ENCODE measurements at regions of chr7 and their contacts with region 1.

Region 1: DNA sequence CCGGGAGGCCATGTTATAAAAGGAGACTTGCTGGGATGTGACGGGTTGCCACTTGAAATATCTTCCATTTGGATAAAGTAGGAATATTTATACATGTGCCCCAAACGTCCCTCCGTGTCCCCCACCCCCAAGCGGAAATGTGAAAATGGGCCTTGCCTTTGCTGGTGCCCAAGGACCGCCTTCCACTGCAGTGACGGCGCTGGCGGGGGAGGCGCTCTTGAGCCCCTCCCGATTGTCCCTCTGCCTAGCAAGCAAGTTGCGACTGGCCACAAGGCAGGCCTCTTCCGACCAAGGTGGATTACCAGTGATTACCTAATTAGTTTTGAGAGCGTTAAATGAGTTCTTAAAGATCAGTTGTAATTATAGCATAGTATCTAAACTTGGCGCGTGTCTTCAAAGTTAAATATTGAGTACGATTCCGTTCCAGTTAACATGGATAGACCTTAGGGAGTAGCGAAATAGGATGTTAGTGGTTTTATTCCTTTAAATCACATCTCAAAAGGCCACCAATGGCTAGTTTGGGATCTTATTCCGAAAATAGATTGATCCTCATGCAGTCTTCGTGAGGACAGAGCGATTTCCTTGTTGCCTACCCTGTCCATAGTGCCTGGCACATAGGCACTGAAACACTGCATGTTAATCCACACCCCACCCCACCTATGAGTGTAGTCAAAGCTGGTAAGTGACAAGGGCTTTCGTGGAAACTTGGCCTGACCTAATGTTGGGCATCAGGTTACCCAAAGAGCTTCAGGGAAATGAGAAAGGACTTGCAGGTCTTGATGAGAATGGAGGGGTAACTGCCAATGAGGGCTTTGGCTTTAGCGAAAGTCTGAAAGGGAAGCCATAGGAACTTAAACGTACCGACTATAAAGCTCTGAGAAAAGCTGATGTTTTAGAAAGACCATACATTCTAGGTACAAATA is 1.1 kb downstream of the PPIA start:
- H3K4me3 ChIP-seq: peak overlapping the region; percentile 87
- H3K27ac ChIP-seq: peak overlapping the region; percentile 95
- H3K4me1 ChIP-seq: 0 out of 2 replicates have a peak, but pooled peaks cover 4% of the 10 kb centered on the region
- CTCF ChIP-seq: peak; percentile 89

Region 2: DNA sequence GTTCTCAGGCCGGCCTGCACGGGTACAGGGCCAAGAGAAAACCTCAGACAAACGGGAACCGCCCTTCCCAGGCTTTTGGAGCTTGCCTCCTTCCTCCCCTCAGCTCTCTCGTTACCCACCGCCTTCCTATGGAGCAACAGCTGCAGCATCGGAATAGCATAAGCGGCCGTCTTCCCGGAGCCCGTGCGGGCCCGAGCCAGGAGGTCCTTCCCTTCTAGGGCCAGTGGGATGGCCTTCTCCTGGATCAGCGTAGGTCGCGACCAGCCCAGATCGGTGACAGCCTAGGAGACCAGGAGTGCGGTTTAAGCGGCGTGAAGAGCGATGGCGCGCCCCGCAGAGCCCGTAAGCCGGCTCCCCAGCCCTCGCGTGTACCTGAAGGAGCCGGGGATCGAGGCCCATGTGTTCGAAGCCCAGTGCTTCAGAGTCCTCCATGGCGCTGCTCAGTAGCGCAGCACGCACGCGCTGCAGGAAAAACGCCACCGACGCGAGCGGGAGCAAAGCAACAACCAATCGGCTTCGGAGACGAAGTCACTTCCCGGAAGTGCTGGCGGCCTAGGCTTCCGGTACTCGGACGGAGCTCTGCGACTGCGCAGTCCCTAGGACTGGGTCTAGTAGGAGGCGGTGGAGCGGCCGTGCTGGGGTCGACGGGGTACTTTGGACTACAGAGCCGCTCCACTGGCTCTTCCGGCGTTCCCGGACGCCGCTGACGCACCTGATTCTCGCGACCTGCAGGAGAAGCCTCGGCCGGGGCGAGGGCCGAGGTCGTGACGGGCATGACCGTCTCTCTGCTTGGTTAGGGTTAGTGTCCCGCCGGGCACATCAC is 223.9 kb before region 1 on chr7 and contains the start of gene DDX56:
- CTCF ChIA-PET with region 1: no interaction called
- POLR2A ChIA-PET with region 1: interaction called, 10 read pairs
- H3K4me3 ChIP-seq: peak within 1 kb of the TSS; percentile 59
- H3K27ac ChIP-seq: peak within 1 kb of the TSS; percentile 80
- H3K4me1 ChIP-seq: no peaks in the 10 kb centered on the region
- CTCF ChIP-seq: no peak; the same call in 1 of the 2 replicates

Region 3: GRCh38 chr7:44819292-44819691 is 21.7 kb after region 1 on chr7:
- CTCF ChIA-PET with region 1: interaction called, 3 read pairs
- POLR2A ChIA-PET with region 1: interaction called, 13 read pairs
- H3K4me3 ChIP-seq: no peak overlapping the region
- H3K27ac ChIP-seq: no peak overlapping the region
- H3K4me1 ChIP-seq: peaks cover 6% of the 10 kb centered on the region; the same call in 1 of the 2 replicates
- CTCF ChIP-seq: no peak

Region 4: GRCh38 chr7:44847508-44847920 is 49.9 kb after region 1 on chr7:
- CTCF ChIA-PET with region 1: interaction called, 6 read pairs
- POLR2A ChIA-PET with region 1: interaction called, 16 read pairs
- H3K4me3 ChIP-seq: peak overlapping the region; percentile 77
- H3K27ac ChIP-seq: peak overlapping the region; percentile 88
- H3K4me1 ChIP-seq: peaks cover 12% of the 10 kb centered on the region
- CTCF ChIP-seq: peak; percentile 95

Region 5: GRCh38 chr7:45136106-45137060 is 338.8 kb after region 1 on chr7:
- CTCF ChIA-PET with region 1: interaction called, 11 read pairs
- POLR2A ChIA-PET with region 1: no interaction called
- H3K4me3 ChIP-seq: no peak overlapping the region
- H3K27ac ChIP-seq: no peak overlapping the region
- H3K4me1 ChIP-seq: no peaks in the 10 kb centered on the region
- CTCF ChIP-seq: peak; percentile 61

Measured in HEK293 (cell line).